Activated CD4-positive, alpha-beta T cell treated with anti-CD3 and anti-CD28 coated beads for 36 hours (primary cell): ENCODE measurements at regions of chr13 and their contacts with region 1.

Region 1: GRCh38 chr13:36346222-36347083 is at the start of gene SPART:
- DNase-seq: peak; percentile 94
- ATAC-seq: peak; percentile 96
- H3K4me3 Mint-ChIP-seq: peak within 1 kb of the TSS; percentile 85
- H3K27ac Mint-ChIP-seq: peak within 1 kb of the TSS; percentile 85
- H3K4me1 Mint-ChIP-seq: peaks cover 29% of the 10 kb centered on the region
- H3K27me3 Mint-ChIP-seq: peaks cover 2% of the 10 kb centered on the region
- total RNA-seq, gene SPART: 30.2 to 40.4 TPM

Region 2: DNA sequence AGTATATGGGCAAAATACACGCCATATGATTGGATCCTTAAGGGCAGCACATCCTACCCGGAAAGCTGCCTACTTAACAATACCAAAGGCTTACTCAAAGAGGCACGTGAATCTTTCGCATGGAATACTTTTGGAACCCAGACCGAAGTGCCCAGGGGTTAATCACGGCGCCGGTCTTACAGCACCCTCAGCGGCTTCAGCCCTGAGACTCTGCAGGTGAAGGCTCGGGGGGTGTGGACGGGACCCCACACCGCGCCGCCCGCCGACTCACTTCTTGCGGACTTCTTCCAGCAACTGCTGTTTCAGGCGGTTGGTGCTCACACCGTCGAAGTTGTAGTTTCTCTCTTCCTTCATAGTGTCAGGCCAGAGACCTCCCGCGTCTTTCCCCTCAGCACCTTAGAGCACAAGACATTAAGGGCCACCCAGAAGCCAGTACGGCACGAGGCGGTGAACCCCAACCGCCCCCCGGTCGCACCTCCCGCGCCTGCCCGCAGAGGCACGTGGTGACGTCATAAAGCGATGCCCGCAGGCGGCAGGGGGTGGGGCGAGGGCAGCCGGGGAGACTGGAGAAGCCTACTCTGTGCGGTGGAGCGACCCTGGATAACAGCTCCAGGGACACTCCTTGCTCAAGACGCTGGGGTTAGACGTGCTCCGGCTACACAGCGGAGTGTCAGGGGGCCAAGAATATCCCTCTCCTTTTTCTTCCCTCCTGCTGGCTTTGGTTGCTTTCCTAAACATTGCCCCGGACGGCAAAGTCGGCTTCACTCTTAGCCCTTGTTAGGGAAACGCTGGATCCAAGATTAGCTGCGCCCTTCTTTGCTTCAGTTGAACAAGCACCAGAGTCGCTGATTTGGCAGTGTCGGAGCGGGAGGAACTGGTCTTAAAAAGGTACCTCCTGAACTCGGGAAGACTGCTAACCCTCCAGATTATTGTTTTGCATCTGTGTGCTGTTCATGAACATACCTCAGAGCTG is 48.8 kb before region 1 on chr13 and contains the start of gene CCDC169:
- CTCF ChIA-PET with region 1: no interaction called
- POLR2A ChIA-PET with region 1: no interaction called
- intact Hi-C with region 1: loop called (anchors 1 to 5 kb)
- DNase-seq: peak; percentile 80
- ATAC-seq: peak; percentile 87
- H3K4me3 Mint-ChIP-seq: peak within 1 kb of the TSS; percentile 79
- H3K27ac Mint-ChIP-seq: peak within 1 kb of the TSS; percentile 61
- H3K4me1 Mint-ChIP-seq: peaks cover 15% of the 10 kb centered on the region
- H3K27me3 Mint-ChIP-seq: peaks cover 34% of the 10 kb centered on the region
- total RNA-seq, gene CCDC169: 0.30 TPM

Region 3: DNA sequence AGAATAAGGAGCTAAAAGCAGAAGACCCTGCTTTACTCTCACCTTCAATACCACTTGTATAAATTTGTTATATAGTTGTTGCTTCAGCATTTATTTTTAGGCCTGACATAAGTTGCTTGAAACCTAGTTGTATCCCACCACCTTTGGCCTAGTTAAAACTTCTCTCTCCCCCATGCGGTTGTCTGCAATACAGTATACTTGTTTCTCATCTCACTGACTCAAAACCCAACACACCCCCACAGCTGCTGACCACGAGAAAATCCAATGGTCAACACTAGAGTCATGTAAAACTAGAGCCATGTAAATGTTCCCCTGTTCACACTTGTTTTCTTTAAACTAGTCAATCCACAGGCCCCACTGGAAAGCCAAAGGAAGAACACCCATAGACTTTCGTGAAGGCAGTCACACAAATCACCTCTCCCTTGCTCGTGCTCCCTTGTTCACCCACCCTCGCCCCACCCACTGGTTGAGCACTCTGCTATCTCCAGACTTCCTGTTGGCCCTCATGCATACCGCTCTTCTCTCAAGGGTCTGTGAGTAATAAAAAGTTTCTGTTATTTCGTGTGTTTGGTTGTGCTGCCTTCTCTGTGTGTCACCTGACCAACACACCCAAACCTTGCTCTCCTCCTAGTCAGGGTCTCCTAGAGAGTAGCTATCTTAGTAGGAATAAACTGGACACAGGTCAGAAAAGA is 35.9 kb before region 1 on chr13:
- CTCF ChIA-PET with region 1: no interaction called
- POLR2A ChIA-PET with region 1: no interaction called
- intact Hi-C with region 1: no loop called
- DNase-seq: no peak
- ATAC-seq: no peak
- H3K4me3 Mint-ChIP-seq: no peak overlapping the region
- H3K27ac Mint-ChIP-seq: no peak overlapping the region
- H3K4me1 Mint-ChIP-seq: no peaks in the 10 kb centered on the region
- H3K27me3 Mint-ChIP-seq: no peaks in the 10 kb centered on the region

Region 4: GRCh38 chr13:36420437-36420891 is 74.0 kb after region 1 on chr13:
- CTCF ChIA-PET with region 1: interaction called, 3 read pairs
- POLR2A ChIA-PET with region 1: no interaction called
- intact Hi-C with region 1: loop called in 1 of 2 experiments (anchors 1 kb)
- DNase-seq: peak; percentile 82
- ATAC-seq: peak; percentile 74
- H3K4me3 Mint-ChIP-seq: no peak overlapping the region
- H3K27ac Mint-ChIP-seq: peak overlapping the region; percentile 75
- H3K4me1 Mint-ChIP-seq: peaks cover 27% of the 10 kb centered on the region
- H3K27me3 Mint-ChIP-seq: peaks cover 48% of the 10 kb centered on the region

Region 5: DNA sequence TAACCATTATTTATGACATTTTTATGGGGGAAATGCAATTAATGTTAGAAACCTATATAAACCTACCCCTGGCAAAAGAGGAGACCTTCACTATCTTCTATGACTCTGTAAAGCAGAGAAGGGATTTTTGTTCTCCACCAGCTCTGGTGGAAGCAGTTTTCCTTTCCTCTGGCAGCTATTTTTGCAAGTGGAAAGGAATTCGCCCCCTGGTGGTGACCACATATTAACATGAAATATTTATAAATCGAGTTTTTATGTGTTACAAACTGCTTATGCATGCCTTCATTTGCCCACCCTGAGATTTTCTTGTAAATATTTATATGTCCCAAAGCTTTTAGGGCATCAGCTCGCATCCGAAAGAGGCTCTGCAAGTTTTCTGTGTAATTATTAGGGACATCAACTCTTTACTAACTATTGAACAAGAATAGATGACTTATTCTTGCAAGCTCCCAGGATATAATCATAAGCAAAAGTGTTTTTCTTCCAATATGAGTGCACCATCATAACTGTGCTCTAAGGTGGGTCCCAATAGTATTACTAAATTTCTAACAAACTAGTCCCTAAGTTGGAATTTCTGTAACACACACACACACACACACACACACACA is 389.8 kb after region 1 on chr13:
- CTCF ChIA-PET with region 1: interaction called, 6 read pairs
- POLR2A ChIA-PET with region 1: no interaction called
- intact Hi-C with region 1: loop called (anchors 1 kb)
- DNase-seq: peak; percentile 57
- ATAC-seq: no peak
- H3K4me3 Mint-ChIP-seq: no peak overlapping the region
- H3K27ac Mint-ChIP-seq: no peak overlapping the region
- H3K4me1 Mint-ChIP-seq: no peaks in the 10 kb centered on the region
- H3K27me3 Mint-ChIP-seq: peaks cover 5% of the 10 kb centered on the region

Region 6: GRCh38 chr13:36999054-36999714 is 652.7 kb after region 1 on chr13 and contains the start of gene ALG5:
- CTCF ChIA-PET with region 1: interaction called, 3 read pairs
- POLR2A ChIA-PET with region 1: no interaction called
- intact Hi-C with region 1: loop called (anchors 1 kb)
- DNase-seq: peak; percentile 94
- ATAC-seq: peak; percentile 66
- H3K4me3 Mint-ChIP-seq: peak within 1 kb of the TSS; percentile 97
- H3K27ac Mint-ChIP-seq: peak within 1 kb of the TSS; percentile 100
- H3K4me1 Mint-ChIP-seq: peaks cover 29% of the 10 kb centered on the region
- H3K27me3 Mint-ChIP-seq: no peaks in the 10 kb centered on the region
- total RNA-seq, gene ALG5: 21.1 to 28.3 TPM

Region 7: GRCh38 chr13:37058910-37059847 is 712.7 kb after region 1 on chr13 and contains the start of gene SUPT20H:
- CTCF ChIA-PET with region 1: no interaction called
- POLR2A ChIA-PET with region 1: no interaction called
- intact Hi-C with region 1: loop called in 1 of 2 experiments (anchors 2 kb)
- DNase-seq: peak; percentile 97
- ATAC-seq: peak; percentile 98
- H3K4me3 Mint-ChIP-seq: peak within 1 kb of the TSS; percentile 98
- H3K27ac Mint-ChIP-seq: peak within 1 kb of the TSS; percentile 88
- H3K4me1 Mint-ChIP-seq: peaks cover 32% of the 10 kb centered on the region
- H3K27me3 Mint-ChIP-seq: no peaks in the 10 kb centered on the region
- total RNA-seq, gene SUPT20H: 67.2 to 69.4 TPM

Region 8: DNA sequence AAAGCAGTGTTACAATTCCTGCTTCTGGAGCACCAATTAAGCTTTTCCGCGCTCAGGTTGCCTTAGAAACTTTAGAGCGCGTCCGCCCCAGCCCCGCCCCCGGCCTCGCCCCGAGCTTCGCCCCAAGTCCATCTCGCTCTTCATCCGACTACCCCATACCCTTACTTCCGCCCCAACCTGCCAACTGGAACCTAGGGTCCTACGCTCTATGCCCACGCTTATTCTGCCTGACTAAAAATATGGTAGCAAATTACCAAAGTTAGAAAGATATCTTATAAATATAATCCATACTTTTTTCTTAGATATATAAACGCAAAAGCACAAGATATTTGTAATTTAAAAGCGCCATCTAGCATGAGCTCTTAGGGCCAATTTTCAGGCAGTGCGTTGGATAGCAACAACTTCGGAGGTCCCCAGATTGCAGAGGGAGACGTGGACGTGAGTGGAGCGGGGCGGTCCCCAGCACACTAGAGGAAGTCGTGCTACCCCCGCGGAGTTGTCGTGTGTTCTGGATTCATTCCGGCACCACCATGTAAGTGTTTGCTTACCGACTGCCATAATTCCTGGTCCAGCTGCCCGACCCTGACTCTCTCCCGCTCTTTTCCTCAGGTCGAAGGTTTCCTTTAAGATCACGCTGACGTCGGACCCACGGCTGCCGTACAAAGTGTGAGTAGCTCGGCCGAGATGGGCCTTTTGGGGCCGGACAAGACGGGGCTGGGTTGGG is 2003.1 kb after region 1 on chr13 and contains the start of gene UFM1:
- CTCF ChIA-PET with region 1: no interaction called
- POLR2A ChIA-PET with region 1: no interaction called
- intact Hi-C with region 1: loop called in 1 of 2 experiments (anchors 5 kb)
- DNase-seq: peak; percentile 92
- ATAC-seq: peak; percentile 93
- H3K4me3 Mint-ChIP-seq: peak within 1 kb of the TSS; percentile 98
- H3K27ac Mint-ChIP-seq: peak within 1 kb of the TSS; percentile 99
- H3K4me1 Mint-ChIP-seq: peaks cover 35% of the 10 kb centered on the region
- H3K27me3 Mint-ChIP-seq: no peaks in the 10 kb centered on the region
- total RNA-seq, gene UFM1: 36.7 to 44.8 TPM